ENCODE measurements at regions of chr7 and their contacts with region 1.

Region 1: GRCh38 chr7:112985377-112985987 is 101.1 kb downstream of the GPR85 start:
- DNase-seq: no peak
- H3K4me3 ChIP-seq: peak overlapping the region; percentile 7
- CTCF ChIP-seq: no peak

Region 2: DNA sequence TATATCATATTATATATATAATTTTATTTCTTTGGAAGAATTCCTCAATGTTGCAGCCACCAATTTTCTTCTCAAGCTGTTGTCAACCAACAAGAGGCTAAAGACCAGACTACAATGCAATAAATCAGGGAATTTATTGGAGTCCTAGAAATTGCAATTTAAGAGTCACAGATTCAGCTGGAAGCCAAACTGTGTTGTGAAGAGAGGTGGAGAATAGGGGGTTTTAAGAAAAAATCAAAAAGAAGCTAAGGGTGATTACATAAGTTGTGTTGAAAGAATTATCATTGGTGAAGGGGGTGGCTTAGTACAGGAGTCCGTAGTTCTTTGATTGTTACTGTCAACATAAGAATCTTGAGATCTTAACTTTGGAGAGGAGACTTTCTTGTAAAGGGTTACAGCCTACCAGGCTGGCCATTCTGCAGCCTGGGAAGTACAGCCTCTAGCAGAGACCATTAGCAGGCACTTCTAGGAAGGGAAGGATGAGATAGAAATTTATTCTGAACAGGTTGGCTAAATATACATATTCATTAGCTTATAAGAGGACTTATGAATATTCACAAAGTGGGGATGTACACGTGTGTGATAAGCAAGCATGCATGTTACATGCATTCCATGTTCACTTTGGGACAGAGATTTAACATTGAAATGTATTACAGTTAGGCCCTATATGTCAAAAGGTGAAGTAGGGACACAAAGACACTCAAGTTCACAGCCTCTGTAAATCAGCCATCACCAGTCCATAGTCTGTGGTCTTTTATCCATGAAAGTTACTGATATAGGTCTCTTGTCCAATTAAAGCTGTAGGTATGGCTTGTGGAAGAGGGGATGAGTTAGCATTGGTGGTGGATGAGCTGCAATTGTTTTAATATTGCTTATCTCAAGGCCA is 187.0 kb before region 1 on chr7:
- in situ Hi-C with region 1: no loop called
- DNase-seq: no peak
- H3K4me3 ChIP-seq: no peak overlapping the region
- CTCF ChIP-seq: no peak

Region 3: GRCh38 chr7:112926018-112926417 is 59.5 kb before region 1 on chr7:
- in situ Hi-C with region 1: no loop called
- DNase-seq: no peak
- H3K4me3 ChIP-seq: no peak overlapping the region
- CTCF ChIP-seq: no peak

Region 4: GRCh38 chr7:112946350-112946749 is 39.1 kb before region 1 on chr7:
- in situ Hi-C with region 1: loop called (anchors 5 kb)
- DNase-seq: no peak
- H3K4me3 ChIP-seq: no peak overlapping the region
- CTCF ChIP-seq: no peak